Breast epithelium (tissue), 4 donors: ENCODE measurements at regions of chr11 and their contacts with region 1.

Region 1: DNA sequence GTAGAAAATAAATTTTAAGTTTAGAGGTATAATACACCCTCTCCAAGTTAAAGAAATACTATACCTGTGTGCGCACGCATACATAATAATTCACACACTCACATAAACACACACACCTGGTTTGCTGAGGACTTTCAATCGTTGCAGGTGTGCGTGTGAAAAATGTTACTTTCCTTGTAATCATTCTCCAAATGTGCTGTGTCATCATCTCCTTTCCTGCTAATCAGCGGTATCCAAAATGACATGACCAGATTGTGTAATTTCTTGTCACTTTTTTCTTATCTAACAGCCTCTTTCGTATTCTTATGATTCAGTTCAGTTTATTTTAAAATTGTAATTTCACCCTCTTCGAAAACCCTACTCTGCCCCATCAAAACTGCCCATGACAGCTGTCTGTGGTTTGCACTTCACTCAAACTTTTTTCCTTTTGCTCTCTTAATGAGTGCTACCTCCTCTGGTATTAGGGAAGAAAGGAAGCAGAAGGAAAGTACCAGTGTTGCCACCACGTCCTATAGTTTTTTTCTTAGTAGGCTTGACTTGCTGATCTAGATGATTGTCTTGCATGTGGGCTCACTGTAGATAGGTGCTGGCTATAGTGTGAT is 651.2 kb downstream of the CNTN5 start:
- DNase-seq: no peak
- H3K4me3 ChIP-seq: no peak overlapping the region
- H3K27ac ChIP-seq: no peak overlapping the region
- H3K4me1 ChIP-seq: no peaks in the 10 kb centered on the region
- H3K27me3 ChIP-seq: no peaks in the 10 kb centered on the region
- CTCF ChIP-seq: no peak
- POLR2A ChIP-seq: no peak

Region 2: GRCh38 chr11:97850701-97851100 is 1821.2 kb before region 1 on chr11:
- intact Hi-C with region 1: loop called (anchors 5 kb)
- DNase-seq: no peak
- H3K4me3 ChIP-seq: no peak overlapping the region
- H3K27ac ChIP-seq: no peak overlapping the region
- H3K4me1 ChIP-seq: no peaks in the 10 kb centered on the region
- H3K27me3 ChIP-seq: no peaks in the 10 kb centered on the region
- CTCF ChIP-seq: no peak
- POLR2A ChIP-seq: no peak

Region 3: DNA sequence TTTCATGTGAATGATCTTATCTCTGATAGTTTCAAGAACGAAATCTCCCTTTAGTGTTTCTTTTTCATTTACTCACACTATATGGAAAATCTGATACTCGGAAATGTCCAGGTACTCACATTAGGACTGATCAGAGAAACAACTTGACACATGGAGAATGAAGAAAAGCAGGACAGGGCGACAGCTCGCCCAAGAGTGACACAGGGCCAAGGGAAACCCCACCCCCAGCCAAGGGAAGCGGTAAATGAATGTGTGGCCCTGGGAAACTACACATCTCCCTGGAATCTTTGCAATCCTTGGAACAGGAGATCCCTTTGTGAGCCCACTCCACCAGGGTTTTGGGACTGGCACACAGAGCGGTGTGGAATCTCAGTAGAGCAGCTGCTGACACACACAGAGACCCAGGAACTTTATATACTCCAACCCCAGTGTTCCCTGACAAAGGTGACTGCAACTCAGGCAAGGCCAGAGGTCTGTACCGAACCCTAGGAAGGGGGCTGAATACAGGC is 711.5 kb after region 1 on chr11:
- intact Hi-C with region 1: no loop called
- DNase-seq: no peak
- H3K4me3 ChIP-seq: no peak overlapping the region
- H3K27ac ChIP-seq: no peak overlapping the region
- H3K4me1 ChIP-seq: no peaks in the 10 kb centered on the region
- H3K27me3 ChIP-seq: no peaks in the 10 kb centered on the region
- CTCF ChIP-seq: no peak
- POLR2A ChIP-seq: no peak